GM12878 (cell line): ENCODE measurements at regions of chr6 and their contacts with region 1.

Region 1: DNA sequence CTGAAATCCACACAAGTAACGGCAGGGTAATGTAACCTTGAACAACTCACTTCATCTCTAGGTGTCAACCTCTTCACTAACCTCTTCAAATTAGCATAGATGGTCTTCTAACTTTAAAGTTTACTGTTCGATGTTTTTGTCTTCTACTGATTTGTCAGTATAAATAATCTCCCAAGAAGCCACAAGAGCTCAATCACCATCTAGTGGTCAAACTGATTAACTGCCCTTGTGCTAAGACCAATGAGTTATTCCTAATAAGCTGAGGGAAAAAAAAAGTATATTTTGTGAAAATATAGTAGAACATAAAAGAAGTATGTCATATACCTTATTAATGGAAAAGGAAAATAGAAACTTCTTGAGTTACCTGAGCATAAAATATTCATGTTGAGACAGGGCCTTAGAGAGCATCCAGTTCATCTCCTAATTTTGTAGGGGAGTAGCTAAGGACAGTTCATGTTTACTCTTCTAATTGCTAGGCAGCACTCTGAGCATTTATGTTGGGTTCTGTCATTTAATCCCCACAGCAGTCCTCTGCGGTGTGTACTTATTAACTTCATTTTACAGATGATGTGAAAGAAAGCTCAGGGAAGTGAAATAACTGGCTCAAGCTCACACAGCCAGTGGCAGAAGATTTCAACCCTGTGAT is 317.1 kb downstream of the ESR1 start:
- DNase-seq: no peak
- ATAC-seq: peak; percentile 82
- H3K4me3 ChIP-seq: no peak overlapping the region
- H3K27ac ChIP-seq: no peak overlapping the region
- H3K4me1 ChIP-seq: no peaks in the 10 kb centered on the region
- H3K27me3 ChIP-seq: no peaks in the 10 kb centered on the region
- CTCF ChIP-seq: peak; percentile 57 to 63 (median 58); a peak in 5 of 6 replicates
- EP300 ChIP-seq: no peak
- POLR2A ChIP-seq: no peak
- RAD21 ChIP-seq: peak; percentile 72

Region 2: GRCh38 chr6:151675746-151676416 is 448.7 kb before region 1 on chr6:
- CTCF ChIA-PET with region 1: interaction called, 33 read pairs
- POLR2A ChIA-PET with region 1: interaction called, 3 read pairs
- RAD21 ChIA-PET with region 1: interaction called, 14 read pairs
- SMC1A ChIA-PET with region 1: interaction called, 25 read pairs
- in situ Hi-C with region 1: no loop called
- intact Hi-C with region 1: loop called (anchors 1 kb)
- DNase-seq: peak; percentile 11
- ATAC-seq: peak; percentile 96
- H3K4me3 ChIP-seq: no peak overlapping the region
- H3K27ac ChIP-seq: no peak overlapping the region
- H3K4me1 ChIP-seq: peaks cover 5% of the 10 kb centered on the region; the same call in 1 of the 2 replicates
- H3K27me3 ChIP-seq: no peaks in the 10 kb centered on the region
- CTCF ChIP-seq: peak; percentile 95 to 99 (median 96)
- EP300 ChIP-seq: no peak
- POLR2A ChIP-seq: no peak
- RAD21 ChIP-seq: peak; percentile 90

Region 3: DNA sequence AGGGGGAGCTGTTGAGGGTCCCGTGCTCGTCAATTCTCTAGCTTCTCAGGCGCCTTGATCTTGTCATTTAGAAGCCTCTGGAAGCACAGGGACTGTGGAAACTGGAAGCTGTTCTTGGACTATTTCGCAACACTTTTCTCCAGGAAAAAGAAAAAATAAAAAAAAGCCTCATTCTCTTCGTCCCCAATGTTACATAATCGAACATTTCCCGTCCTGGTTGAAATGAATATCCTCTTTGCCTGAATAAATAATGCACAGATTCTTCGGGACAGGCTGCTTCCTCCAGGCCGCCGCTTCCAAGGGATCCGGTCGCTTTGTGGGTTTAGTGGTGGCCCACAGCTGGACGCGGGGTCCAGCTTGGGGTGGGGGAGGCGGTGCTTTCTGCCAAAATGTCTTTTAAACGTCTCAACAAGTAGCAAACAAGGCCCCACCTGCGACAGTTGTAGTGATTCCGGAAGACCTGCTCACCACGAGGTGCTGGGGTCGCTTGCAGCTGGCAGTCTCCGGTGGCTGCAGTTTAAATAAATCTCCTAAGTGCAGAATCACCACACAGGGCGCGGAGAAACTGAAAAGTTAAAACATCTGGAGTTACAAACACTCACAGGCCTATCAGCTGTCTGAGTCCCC is 443.0 kb before region 1 on chr6:
- CTCF ChIA-PET with region 1: interaction called, 33 read pairs
- POLR2A ChIA-PET with region 1: no interaction called
- RAD21 ChIA-PET with region 1: interaction called, 14 read pairs
- SMC1A ChIA-PET with region 1: interaction called, 25 read pairs
- in situ Hi-C with region 1: no loop called
- intact Hi-C with region 1: no loop called
- DNase-seq: no peak
- ATAC-seq: peak; percentile 49
- H3K4me3 ChIP-seq: no peak overlapping the region
- H3K27ac ChIP-seq: no peak overlapping the region
- H3K4me1 ChIP-seq: no peaks in the 10 kb centered on the region
- H3K27me3 ChIP-seq: 0 out of 4 replicates have a peak, but pooled peaks cover 0 to 3% of the 10 kb centered on the region in 2 experiments
- CTCF ChIP-seq: no peak
- EP300 ChIP-seq: no peak
- POLR2A ChIP-seq: no peak
- RAD21 ChIP-seq: no peak

Region 4: DNA sequence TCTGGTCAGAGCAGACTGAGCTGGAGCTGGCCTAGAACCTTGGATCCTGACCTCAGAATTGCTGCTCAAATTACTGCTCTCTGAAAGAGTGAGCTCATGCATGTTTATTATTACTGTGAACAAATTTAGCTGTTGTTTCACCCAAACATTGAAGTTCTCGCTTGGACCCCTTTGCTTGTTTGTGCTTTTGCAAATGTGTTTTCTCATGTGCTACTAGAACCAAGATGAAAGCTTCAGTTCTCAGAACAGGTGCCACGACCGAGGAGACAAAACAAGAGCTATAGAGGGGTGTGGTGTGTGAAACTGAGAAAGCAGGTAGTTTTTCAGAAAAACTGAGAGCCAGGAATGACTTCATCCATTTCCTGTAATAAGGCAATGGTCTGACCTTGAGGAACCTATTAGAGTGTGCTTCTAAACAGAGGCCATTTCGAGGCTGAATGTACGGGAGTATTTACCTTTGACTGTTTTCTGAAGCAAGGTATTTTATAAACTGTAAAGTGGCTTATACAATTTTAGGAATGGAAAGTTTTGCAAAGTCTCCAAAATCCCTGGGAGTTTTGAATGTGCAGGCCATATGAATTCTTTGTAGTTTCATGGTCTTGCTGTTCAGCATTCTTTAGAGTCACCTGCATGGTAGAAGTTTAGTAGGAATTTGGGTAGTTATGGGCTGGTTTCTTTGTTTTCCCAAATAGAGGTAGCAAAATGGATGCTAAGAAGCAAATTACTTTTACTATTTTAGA is 366.9 kb before region 1 on chr6:
- CTCF ChIA-PET with region 1: interaction called, 19 read pairs
- POLR2A ChIA-PET with region 1: no interaction called
- RAD21 ChIA-PET with region 1: interaction called, 9 read pairs
- SMC1A ChIA-PET with region 1: interaction called, 5 read pairs
- in situ Hi-C with region 1: loop called (anchors 10 kb)
- intact Hi-C with region 1: no loop called
- DNase-seq: peak; percentile 69
- ATAC-seq: peak; percentile 97
- H3K4me3 ChIP-seq: no peak overlapping the region
- H3K27ac ChIP-seq: 0 out of 2 replicates have a peak overlapping the region, but pooled peaks have one; percentile 58
- H3K4me1 ChIP-seq: peaks cover 12% of the 10 kb centered on the region
- H3K27me3 ChIP-seq: no peaks in the 10 kb centered on the region
- CTCF ChIP-seq: no peak
- EP300 ChIP-seq: peak; percentile 34 to 57; a peak in 3 of 4 replicates
- POLR2A ChIP-seq: no peak
- RAD21 ChIP-seq: no peak

Region 5: GRCh38 chr6:151822260-151823111 is 302.1 kb before region 1 on chr6:
- CTCF ChIA-PET with region 1: interaction called, 10 read pairs
- POLR2A ChIA-PET with region 1: no interaction called
- RAD21 ChIA-PET with region 1: interaction called, 3 read pairs
- SMC1A ChIA-PET with region 1: interaction called, 3 read pairs
- in situ Hi-C with region 1: no loop called
- intact Hi-C with region 1: no loop called
- DNase-seq: peak; percentile 32
- ATAC-seq: peak; percentile 96
- H3K4me3 ChIP-seq: no peak overlapping the region
- H3K27ac ChIP-seq: no peak overlapping the region
- H3K4me1 ChIP-seq: peaks cover 4% of the 10 kb centered on the region
- H3K27me3 ChIP-seq: no peaks in the 10 kb centered on the region
- CTCF ChIP-seq: no peak
- EP300 ChIP-seq: peak; percentile 68 to 73; a peak in 2 of 4 replicates
- POLR2A ChIP-seq: no peak
- RAD21 ChIP-seq: no peak

Region 6: DNA sequence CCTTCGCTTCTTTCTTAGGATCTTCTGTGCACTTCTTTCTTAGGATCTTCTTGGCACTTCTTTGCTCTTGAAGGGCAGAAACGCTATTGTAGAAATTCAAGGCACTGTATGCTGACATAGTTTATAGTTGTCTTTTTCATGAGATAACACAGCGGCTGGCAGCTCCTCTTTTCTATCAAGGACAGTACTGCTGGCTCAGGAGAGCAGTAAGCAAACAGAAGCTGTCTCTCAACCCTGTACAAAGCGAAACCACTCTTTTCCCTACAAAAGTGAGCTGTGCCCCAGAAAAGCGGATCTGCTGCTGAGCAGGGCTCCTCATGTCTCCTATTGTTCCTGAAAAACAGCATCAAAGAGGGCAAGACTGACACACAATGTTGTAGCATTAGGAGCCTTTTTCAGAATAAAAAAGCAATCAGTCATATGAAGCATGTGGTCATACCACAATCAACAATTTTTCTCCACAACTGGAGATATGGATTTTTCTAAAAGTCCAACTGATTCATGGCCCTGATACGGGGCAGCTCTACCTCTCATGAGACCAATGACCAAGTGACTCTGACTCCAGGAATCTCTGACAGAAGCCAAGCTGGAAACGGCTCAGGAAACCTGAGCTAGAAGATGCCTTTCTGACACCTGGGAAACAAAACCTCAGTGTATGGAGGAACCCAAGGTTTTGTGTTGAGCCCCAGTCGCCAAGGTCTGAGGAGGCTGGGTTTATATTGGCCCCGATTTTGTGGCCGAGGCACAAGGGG is 61.2 kb before region 1 on chr6:
- CTCF ChIA-PET with region 1: no interaction called
- POLR2A ChIA-PET with region 1: no interaction called
- RAD21 ChIA-PET with region 1: no interaction called
- SMC1A ChIA-PET with region 1: no interaction called
- in situ Hi-C with region 1: no loop called
- intact Hi-C with region 1: no loop called
- DNase-seq: no peak
- ATAC-seq: no peak
- H3K4me3 ChIP-seq: no peak overlapping the region
- H3K27ac ChIP-seq: no peak overlapping the region
- H3K4me1 ChIP-seq: no peaks in the 10 kb centered on the region
- H3K27me3 ChIP-seq: no peaks in the 10 kb centered on the region
- CTCF ChIP-seq: no peak
- EP300 ChIP-seq: no peak
- POLR2A ChIP-seq: no peak
- RAD21 ChIP-seq: no peak

Region 7: GRCh38 chr6:152094992-152095592 is 29.5 kb before region 1 on chr6:
- CTCF ChIA-PET with region 1: no interaction called
- POLR2A ChIA-PET with region 1: no interaction called
- RAD21 ChIA-PET with region 1: no interaction called
- SMC1A ChIA-PET with region 1: no interaction called
- in situ Hi-C with region 1: no loop called
- intact Hi-C with region 1: no loop called
- DNase-seq: no peak
- ATAC-seq: peak; percentile 71
- H3K4me3 ChIP-seq: no peak overlapping the region
- H3K27ac ChIP-seq: no peak overlapping the region
- H3K4me1 ChIP-seq: no peaks in the 10 kb centered on the region
- H3K27me3 ChIP-seq: no peaks in the 10 kb centered on the region; a peak in 2 of 4 replicates
- CTCF ChIP-seq: no peak
- EP300 ChIP-seq: no peak
- POLR2A ChIP-seq: no peak
- RAD21 ChIP-seq: no peak

Region 8: DNA sequence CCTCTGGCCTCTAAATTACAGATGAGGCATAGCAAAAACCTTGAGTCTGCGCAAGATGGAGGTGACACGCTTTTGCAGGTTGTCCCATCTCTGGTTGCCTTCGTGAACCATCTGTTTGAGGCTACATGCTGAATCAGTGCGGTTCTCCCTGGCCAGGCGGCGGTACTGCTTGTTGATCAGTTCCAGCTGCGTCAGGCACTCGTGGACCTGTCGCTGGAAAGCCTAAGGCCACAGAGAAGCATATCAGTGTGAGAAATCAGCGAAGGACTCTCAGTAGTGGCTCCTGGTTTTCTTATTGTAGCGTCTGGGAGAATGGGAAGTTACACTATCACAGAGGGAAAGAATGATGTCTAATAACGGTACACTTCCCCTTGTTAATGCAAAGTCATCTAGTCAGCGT is 27.4 kb after region 1 on chr6:
- CTCF ChIA-PET with region 1: interaction called, 11 read pairs
- POLR2A ChIA-PET with region 1: no interaction called
- RAD21 ChIA-PET with region 1: interaction called, 4 read pairs
- SMC1A ChIA-PET with region 1: interaction called, 3 read pairs
- in situ Hi-C with region 1: no loop called
- intact Hi-C with region 1: no loop called
- DNase-seq: no peak
- ATAC-seq: no peak
- H3K4me3 ChIP-seq: no peak overlapping the region
- H3K27ac ChIP-seq: no peak overlapping the region
- H3K4me1 ChIP-seq: no peaks in the 10 kb centered on the region
- H3K27me3 ChIP-seq: no peaks in the 10 kb centered on the region
- CTCF ChIP-seq: no peak
- EP300 ChIP-seq: no peak
- POLR2A ChIP-seq: no peak
- RAD21 ChIP-seq: no peak